Activated CD4-positive, alpha-beta memory T cell treated with anti-CD3 and anti-CD28 coated beads, Interleukin-2, amount 10 ng/mL, durations not matched to agents 7 days and 5 days (primary cell): ENCODE measurements at regions of chr11 and their contacts with region 1.

Region 1: GRCh38 chr11:18321980-18322711 is at the starts of genes GTF2H1 and HPS5:
- DNase-seq: peak; percentile 96
- H3K4me3 Mint-ChIP-seq: peak within 1 kb of the TSS; percentile 98
- H3K27ac Mint-ChIP-seq: peak within 1 kb of the TSS; percentile 96
- H3K4me1 Mint-ChIP-seq: peaks cover 65% of the 10 kb centered on the region
- H3K27me3 Mint-ChIP-seq: no peaks in the 10 kb centered on the region
- total RNA-seq, gene GTF2H1: 47.0 to 48.2 TPM
- total RNA-seq, gene HPS5: 20.3 to 22.6 TPM

Region 2: DNA sequence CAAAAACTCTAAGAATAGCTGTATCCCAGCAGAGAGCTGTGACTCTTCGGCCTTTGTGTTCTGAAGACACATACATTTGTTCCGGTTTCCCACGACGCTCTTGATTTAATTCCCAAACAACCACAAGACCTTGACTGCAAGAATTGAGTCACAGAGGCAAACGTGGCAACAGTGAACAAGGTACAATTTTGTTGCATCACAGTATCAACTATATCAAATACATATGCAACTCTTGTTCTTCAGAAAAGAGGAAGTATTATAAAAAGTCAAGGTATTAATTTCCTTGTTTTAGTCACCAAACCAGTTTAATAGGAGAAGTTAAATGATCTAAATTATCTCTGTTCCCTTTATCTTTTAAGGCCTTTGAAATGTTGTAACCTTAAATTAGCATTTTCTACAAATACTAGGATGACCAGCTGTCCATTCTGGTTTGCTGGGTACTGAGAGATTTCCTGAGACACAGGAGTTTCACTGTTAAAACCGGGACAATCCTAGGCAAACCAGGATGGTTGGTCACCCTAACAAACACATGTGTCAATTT is 11.3 kb before region 1 on chr11:
- CTCF ChIA-PET with region 1: interaction called, 3 read pairs
- POLR2A ChIA-PET with region 1: interaction called, 11 read pairs
- DNase-seq: no peak
- H3K4me3 Mint-ChIP-seq: no peak overlapping the region
- H3K27ac Mint-ChIP-seq: no peak overlapping the region
- H3K4me1 Mint-ChIP-seq: peaks cover 8% of the 10 kb centered on the region
- H3K27me3 Mint-ChIP-seq: no peaks in the 10 kb centered on the region

Region 3: DNA sequence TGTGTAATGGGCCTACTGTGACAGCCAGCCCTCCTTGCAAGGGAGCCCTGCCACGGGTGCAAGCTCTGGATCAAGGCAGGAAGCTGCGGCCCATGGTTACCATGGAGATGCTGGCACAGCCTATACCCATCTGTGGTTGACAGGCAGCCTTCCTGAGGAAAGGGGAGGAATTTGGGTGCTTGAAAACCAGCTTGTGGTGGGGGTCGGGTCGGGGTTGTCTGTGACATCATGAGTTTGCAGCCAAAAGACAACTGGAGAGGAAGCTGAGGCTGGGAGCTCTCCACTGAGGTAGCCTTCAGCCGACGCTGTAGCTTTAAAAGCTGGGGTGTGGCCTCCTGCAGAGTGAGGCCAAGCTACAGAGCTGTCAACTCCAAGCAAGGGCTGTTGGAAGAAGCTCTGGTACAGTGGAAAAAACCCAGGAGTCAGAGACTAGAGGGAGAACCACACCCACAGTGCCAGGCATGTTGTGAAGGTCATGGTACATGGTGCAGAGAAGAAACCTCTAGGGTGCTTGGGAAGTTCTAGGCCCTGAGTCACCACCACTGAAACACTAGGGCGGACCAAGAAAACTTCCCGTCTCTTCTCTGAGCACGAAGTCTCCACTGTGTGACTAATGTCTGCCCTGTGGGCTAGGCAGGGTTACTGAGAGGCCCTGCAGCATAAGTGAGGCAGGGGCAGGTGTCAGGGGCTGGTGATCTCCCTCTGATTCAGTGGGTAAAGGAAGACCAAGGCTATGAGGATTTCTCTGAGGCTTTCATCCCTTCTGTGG is 61.4 kb after region 1 on chr11:
- CTCF ChIA-PET with region 1: interaction called, 7 read pairs
- POLR2A ChIA-PET with region 1: interaction called, 46 read pairs
- DNase-seq: peak; percentile 79
- H3K4me3 Mint-ChIP-seq: peak overlapping the region; percentile 58
- H3K27ac Mint-ChIP-seq: peak overlapping the region; percentile 99
- H3K4me1 Mint-ChIP-seq: peaks cover 42% of the 10 kb centered on the region
- H3K27me3 Mint-ChIP-seq: no peaks in the 10 kb centered on the region